ENCODE measurements at regions of chr19 and their contacts with region 1.

Region 1: DNA sequence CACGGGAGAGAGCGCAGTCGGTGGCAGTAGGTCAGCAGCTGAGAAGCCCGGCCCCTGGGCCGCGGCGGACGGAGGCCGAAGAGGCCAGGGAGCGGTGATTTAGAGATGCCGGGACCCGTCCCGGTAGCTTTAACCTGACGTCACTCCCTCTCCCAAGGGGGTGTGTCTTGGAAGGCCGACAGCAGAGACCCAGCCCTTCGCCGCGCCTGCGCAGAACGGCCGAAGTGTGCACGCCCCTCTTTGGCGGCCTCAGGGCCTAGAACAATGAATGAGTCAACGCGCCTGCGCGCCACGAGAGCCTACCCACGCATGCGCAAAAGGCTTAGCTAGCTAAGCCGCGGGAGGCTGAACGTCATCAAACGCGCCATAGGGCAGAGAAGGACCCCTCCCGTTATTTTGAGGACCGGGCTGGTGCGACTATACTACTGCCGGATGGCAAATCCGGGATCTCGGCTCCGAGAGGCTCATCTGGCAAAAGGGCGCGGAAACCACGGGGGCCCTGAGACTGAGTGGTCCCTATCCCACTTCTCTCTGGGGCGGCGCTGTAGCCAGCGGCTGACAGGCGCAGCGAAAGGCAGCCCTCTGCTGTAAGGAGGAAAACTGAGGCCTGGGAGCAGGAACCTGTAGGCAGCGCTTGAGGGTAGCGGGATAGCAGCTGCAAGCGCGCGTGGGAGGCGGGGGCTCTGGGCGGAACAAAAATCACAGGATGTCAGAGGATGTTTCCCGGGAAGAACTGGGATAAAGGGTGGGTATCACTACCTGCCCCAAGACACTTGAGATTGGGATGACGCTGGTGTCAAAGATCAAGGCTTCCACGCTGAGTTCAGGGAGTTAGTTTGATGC is at the starts of genes IRGQ and ZNF576:
- DNase-seq: peak; percentile 100
- ATAC-seq: peak; percentile 88
- H3K4me3 Mint-ChIP-seq: peak within 1 kb of the TSS; percentile 94
- H3K27ac Mint-ChIP-seq: peak within 1 kb of the TSS; percentile 90
- H3K4me1 Mint-ChIP-seq: peaks cover 29% of the 10 kb centered on the region
- H3K27me3 Mint-ChIP-seq: no peaks in the 10 kb centered on the region
- total RNA-seq, gene IRGQ: 12.9 to 23.0 TPM
- total RNA-seq, gene ZNF576: 18.6 to 21.3 TPM

Region 2: DNA sequence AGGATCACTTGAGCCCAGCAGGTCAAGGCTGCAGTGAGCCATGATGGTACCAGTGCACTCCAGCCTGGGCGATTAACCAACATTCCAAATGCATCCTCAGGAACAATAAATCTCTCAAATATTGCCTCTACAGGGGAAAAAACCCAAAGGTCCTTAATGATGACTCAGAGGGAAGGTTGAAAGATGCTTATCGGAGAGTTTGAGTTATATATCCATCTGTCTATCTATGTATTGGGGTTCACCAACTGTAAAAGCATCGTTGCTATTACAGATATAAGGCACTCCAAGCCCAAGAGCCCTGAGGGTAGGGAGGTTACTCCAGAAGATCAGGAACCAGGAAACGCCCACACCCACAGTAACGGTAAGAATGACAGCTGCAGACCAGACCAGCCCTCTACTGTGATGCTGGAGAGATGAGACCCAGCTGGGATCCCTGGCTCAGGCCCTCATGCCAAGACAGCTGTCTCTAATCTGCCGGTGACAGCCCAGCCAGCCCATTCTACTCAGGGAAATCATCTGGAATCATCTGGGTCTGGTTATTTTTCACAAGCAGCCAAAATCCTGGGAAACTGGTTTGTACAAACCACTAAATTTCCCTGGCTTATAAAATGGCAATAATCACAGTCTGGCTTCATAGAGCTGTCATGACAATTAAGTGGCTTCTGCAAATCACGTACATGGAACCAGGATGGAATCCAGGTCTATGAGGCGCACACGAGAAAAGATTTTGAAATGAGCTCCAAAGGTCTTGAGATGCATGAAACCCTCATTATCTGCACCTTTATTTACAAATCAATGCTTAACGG is 157.7 kb before region 1 on chr19:
- CTCF ChIA-PET with region 1: interaction called, 19 read pairs
- DNase-seq: no peak
- ATAC-seq: no peak
- H3K4me3 Mint-ChIP-seq: peak overlapping the region; percentile 36
- H3K27ac Mint-ChIP-seq: peak overlapping the region; percentile 78
- H3K4me1 Mint-ChIP-seq: peaks cover 21% of the 10 kb centered on the region
- H3K27me3 Mint-ChIP-seq: no peaks in the 10 kb centered on the region

Region 3: GRCh38 chr19:43503501-43504425 is 92.5 kb before region 1 on chr19:
- CTCF ChIA-PET with region 1: interaction called, 17 read pairs
- DNase-seq: peak; percentile 99
- ATAC-seq: peak; percentile 95
- H3K4me3 Mint-ChIP-seq: peak overlapping the region; percentile 97
- H3K27ac Mint-ChIP-seq: peak overlapping the region; percentile 91
- H3K4me1 Mint-ChIP-seq: peaks cover 21% of the 10 kb centered on the region
- H3K27me3 Mint-ChIP-seq: no peaks in the 10 kb centered on the region

Region 4: DNA sequence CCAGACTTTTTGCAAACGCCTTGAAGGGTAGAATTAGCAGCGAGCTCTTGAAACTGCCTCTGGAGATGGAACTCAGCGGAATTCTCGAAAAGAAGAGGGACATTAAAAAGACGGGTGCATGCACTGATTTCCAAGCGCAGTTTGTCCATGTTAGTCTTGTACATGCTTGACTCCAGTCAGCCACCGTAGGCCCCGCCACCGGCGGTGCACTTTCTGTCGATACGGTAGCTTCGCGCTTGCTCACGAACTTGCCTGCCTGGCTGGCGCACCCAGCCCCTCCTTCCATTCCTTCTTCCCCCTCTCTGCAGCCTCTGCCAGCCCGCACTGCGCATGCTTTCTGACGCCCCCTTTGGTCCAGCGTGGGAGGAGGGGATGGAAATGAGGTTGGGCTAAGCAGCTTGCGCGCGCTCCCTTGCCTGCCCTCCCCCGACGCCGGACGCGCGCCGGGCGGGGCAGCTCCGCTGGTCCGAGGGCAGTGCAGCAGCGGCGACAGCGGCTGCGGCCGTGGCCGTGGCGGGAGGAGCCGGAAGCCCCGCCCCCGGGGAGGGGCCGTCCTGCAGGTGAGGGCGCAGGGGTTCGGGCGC is 63.2 kb before region 1 on chr19 and contains the start of gene ZNF575:
- CTCF ChIA-PET with region 1: interaction called, 111 read pairs
- DNase-seq: peak; percentile 93
- ATAC-seq: peak; percentile 67
- H3K4me3 Mint-ChIP-seq: peak within 1 kb of the TSS; percentile 94
- H3K27ac Mint-ChIP-seq: peak within 1 kb of the TSS; percentile 98
- H3K4me1 Mint-ChIP-seq: peaks cover 19% of the 10 kb centered on the region
- H3K27me3 Mint-ChIP-seq: no peaks in the 10 kb centered on the region
- total RNA-seq, gene ZNF575: 2.9 to 3.7 TPM

Region 5: GRCh38 chr19:43562698-43563241 is 33.5 kb before region 1 on chr19:
- CTCF ChIA-PET with region 1: interaction called, 173 read pairs
- DNase-seq: peak; percentile 91
- ATAC-seq: peak; percentile 90
- H3K4me3 Mint-ChIP-seq: peak overlapping the region; percentile 33
- H3K27ac Mint-ChIP-seq: peak overlapping the region; percentile 92
- H3K4me1 Mint-ChIP-seq: peaks cover 37% of the 10 kb centered on the region
- H3K27me3 Mint-ChIP-seq: no peaks in the 10 kb centered on the region

Region 6: DNA sequence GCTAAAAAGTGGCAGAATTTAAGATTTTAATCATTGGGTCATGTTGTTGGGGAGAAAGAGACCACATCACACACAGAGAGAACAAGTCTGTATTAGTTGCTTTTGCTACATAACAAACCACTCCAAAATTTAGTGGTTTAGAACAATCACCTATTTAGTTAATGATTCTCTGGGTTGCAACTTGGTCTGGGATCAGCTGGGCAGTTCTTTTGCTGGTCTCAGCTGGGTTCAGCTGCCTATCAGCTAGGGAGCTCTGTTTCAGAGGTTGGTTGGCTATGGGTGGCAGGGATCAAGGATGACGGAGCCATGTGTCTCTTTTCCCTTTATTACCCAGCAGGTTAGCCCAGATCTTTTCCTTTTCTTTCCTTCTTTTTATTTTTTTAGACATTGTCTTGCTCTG is 11.7 kb before region 1 on chr19:
- CTCF ChIA-PET with region 1: interaction called, 53 read pairs
- DNase-seq: no peak
- ATAC-seq: no peak
- H3K4me3 Mint-ChIP-seq: no peak overlapping the region
- H3K27ac Mint-ChIP-seq: peak overlapping the region; percentile 83
- H3K4me1 Mint-ChIP-seq: peaks cover 45% of the 10 kb centered on the region
- H3K27me3 Mint-ChIP-seq: no peaks in the 10 kb centered on the region

Measured in activated CD8-positive, alpha-beta memory T cell treated with anti-CD3 and anti-CD28 coated beads, Interleukin-2, amount 10 ng/mL, durations not matched to agents 7 days and 5 days (primary cell).